ENCODE measurements at regions of chr11 and their contacts with region 1.

Region 1: DNA sequence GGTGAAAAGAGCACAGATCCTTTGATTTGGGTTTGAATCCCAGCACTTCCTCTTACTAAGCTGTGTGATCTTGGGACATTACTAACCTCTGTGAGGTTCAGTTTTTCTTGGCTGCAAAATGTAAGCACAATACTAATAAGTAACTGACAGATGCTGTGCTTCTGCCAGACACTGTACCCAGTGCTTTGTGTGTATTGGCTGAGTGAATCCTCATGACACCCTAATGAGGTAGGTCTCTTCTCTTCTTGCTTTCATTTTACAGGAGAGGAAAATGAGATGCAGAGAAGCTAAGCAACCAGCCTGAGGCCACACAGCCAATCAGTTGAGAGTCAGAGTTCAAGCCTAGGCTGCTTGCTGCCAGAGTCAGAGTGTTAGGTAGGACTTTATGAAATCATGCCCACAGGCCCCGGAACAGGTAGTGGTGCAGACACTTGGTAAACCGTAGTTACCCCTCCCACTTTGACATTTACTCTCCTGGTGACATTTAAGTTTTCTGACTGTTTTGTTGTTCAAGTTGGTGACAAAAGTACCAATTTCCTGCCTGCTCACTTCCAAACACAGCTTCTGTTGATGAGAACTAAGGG is 21.2 kb downstream of the PTPRJ start:
- DNase-seq: peak; percentile 95
- H3K4me3 Mint-ChIP-seq: peak overlapping the region; percentile 65
- H3K27ac Mint-ChIP-seq: peak overlapping the region; percentile 98
- H3K4me1 Mint-ChIP-seq: peaks cover 90% of the 10 kb centered on the region
- H3K27me3 Mint-ChIP-seq: no peaks in the 10 kb centered on the region

Region 2: DNA sequence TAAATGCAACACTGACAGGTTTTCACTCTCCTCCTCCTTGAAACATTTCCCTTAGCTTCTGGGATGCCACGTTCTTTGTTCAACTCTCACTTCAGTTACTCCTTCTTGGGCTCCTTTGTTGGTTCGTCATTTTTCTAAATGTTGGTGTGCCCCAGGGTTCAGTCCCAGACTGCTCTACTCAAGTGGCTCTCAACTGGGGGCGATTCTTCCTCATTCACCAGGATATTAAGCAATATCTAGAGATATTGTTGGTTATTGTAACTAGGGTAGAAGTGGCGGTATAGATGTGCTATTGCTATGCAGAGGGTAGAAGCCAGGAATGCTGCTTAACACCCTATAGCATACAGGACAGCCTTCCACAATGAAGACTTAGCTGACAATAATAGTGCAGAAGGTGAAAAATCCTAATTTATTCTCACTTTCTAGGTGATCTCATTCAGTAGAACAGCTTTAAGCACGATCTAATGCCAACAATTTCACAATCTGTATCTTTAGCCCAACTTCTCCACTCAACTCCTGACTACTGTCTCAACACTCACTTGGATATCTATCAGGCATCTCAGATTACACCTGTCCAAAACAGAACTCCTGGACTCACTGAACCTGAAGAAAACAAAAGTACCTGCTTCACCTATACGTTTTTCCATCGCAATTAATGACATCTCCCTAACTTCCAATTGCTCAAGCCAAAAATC is 158.0 kb before region 1 on chr11:
- CTCF ChIA-PET with region 1: no interaction called
- POLR2A ChIA-PET with region 1: no interaction called
- DNase-seq: no peak
- H3K4me3 Mint-ChIP-seq: no peak overlapping the region
- H3K27ac Mint-ChIP-seq: no peak overlapping the region
- H3K4me1 Mint-ChIP-seq: peaks cover 21% of the 10 kb centered on the region
- H3K27me3 Mint-ChIP-seq: no peaks in the 10 kb centered on the region

Region 3: GRCh38 chr11:48013269-48013901 is 11.9 kb after region 1 on chr11:
- CTCF ChIA-PET with region 1: interaction called, 15 read pairs
- POLR2A ChIA-PET with region 1: interaction called, 5 read pairs
- DNase-seq: peak; percentile 63
- H3K4me3 Mint-ChIP-seq: peak overlapping the region; percentile 53
- H3K27ac Mint-ChIP-seq: peak overlapping the region; percentile 96
- H3K4me1 Mint-ChIP-seq: peaks cover 87% of the 10 kb centered on the region
- H3K27me3 Mint-ChIP-seq: no peaks in the 10 kb centered on the region

Region 4: DNA sequence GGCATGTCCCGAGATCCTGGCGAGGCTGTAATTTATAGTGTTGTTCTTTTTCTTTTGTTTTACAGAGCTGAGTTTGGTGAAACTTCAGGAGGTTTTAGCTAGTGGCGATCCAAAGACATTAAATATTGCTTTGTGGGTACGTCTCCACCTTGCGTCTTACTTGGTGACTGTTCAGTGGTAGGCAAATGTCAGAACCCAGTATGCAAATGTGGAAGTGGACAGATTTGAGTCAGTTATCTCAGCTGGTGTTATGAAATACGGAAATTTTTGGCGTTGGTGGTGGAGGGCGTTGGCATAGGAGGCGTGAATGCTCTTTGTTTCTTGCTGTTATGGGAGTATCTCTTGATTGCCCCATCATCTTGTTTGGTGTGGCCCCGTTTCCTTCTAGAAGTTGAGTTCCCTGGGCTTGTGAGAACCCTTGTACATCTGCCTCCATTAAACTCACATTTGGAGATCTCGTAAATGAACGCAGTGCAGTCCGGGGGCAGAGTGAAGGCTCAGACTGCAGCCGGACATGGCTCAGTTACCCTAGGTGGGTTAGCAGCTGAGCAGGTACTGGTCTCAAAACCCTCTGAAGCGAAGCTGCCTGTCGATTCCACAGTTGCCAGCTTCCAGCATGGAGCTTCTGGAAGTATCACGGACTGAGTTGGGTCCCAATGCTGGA is 18.7 kb after region 1 on chr11:
- CTCF ChIA-PET with region 1: interaction called, 15 read pairs
- POLR2A ChIA-PET with region 1: no interaction called
- DNase-seq: no peak
- H3K4me3 Mint-ChIP-seq: no peak overlapping the region
- H3K27ac Mint-ChIP-seq: peak overlapping the region; percentile 75
- H3K4me1 Mint-ChIP-seq: peaks cover 79% of the 10 kb centered on the region
- H3K27me3 Mint-ChIP-seq: no peaks in the 10 kb centered on the region

Measured in activated CD4-positive, alpha-beta T cell treated with anti-CD3 and anti-CD28 coated beads, Interleukin-2, amount 10 ng/mL, durations not matched to agents 7 days and 5 days (primary cell).